ENCODE measurements at regions of chr9 and their contacts with region 1.

Region 1: GRCh38 chr9:33466565-33467495 is 6.9 kb downstream of the NOL6 start:
- DNase-seq: peak; percentile 32
- H3K4me3 ChIP-seq: no peak overlapping the region
- H3K27ac ChIP-seq: no peak overlapping the region
- H3K4me1 ChIP-seq: no peaks in the 10 kb centered on the region
- H3K27me3 ChIP-seq: no peaks in the 10 kb centered on the region
- CTCF ChIP-seq: peak; percentile 90

Region 2: DNA sequence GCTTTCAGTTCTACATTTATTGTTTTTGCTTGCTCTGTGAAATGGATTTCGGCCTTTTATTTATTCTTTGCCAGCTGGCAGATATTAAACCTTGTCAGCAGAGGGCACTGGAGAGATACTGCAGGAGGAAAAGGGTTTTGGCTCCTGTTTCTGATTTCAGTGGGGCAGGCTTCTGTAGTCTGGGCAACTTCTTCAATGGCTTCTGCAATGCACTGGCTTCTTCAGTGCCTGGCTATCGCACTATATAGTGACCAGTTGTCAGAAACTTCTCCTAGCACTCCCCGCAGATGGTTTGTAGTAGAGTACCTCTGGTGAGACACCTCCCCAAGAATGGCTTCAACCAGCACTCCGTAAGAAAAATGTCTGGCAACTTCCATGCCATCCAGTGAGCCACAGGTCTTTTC is 179.7 kb before region 1 on chr9:
- CTCF ChIA-PET with region 1: interaction called, 4 read pairs
- POLR2A ChIA-PET with region 1: no interaction called
- intact Hi-C with region 1: loop called (anchors 5 kb)
- DNase-seq: peak; percentile 82
- H3K4me3 ChIP-seq: no peak overlapping the region
- H3K27ac ChIP-seq: no peak overlapping the region
- H3K4me1 ChIP-seq: peaks cover 4% of the 10 kb centered on the region
- H3K27me3 ChIP-seq: no peaks in the 10 kb centered on the region
- CTCF ChIP-seq: peak; percentile 80

Region 3: GRCh38 chr9:33374634-33375213 is 92.1 kb before region 1 on chr9:
- CTCF ChIA-PET with region 1: interaction called, 21 read pairs
- POLR2A ChIA-PET with region 1: no interaction called
- intact Hi-C with region 1: loop called (anchors 2 kb)
- DNase-seq: peak; percentile 85
- H3K4me3 ChIP-seq: no peak overlapping the region
- H3K27ac ChIP-seq: no peak overlapping the region
- H3K4me1 ChIP-seq: no peaks in the 10 kb centered on the region
- H3K27me3 ChIP-seq: no peaks in the 10 kb centered on the region
- CTCF ChIP-seq: peak; percentile 91

Region 4: DNA sequence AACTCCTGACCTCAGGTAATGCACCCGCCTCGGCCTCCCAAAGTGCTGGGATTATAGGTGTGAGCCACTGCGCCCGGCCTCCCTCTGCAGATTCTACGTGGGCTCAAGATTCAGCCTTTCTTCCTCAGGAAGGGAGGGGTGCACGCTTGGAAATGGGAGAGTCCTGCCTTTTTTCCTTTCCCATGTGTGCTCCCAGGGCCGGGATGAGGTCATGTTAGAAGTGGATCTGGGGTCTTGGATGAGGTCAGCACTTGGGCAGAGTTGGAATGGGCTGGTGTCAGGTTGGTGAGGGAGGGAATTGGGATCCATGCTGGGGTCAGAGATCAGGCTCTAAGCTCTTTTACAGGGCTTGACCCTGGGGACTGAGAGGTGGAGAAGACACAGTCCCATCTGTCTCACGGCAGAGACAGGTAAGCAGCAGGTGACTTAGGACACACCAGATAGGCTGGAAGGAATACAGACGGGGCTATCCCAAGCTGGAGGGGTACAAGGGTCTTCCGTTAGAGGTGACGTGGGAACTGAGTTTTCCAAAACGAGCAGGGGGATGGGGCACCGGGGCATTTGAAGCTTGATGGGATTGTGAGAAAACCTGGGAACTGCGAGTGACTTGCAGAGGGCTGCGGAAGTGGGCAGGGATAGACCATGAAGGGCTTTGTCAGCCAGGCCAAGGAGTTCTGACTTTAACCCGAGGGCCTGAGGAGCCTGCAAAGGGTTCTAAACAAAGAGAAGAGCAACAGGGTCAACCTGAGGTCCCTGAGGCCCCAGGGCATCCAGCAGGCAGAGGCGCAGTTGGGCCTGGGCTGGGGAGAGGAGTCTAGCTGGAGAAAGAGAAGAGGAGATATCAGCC is 62.7 kb before region 1 on chr9:
- CTCF ChIA-PET with region 1: interaction called, 25 read pairs
- POLR2A ChIA-PET with region 1: no interaction called
- intact Hi-C with region 1: no loop called
- DNase-seq: no peak
- H3K4me3 ChIP-seq: no peak overlapping the region
- H3K27ac ChIP-seq: no peak overlapping the region
- H3K4me1 ChIP-seq: no peaks in the 10 kb centered on the region
- H3K27me3 ChIP-seq: no peaks in the 10 kb centered on the region
- CTCF ChIP-seq: no peak

Region 5: GRCh38 chr9:33452828-33453271 is 14.0 kb before region 1 on chr9:
- CTCF ChIA-PET with region 1: interaction called, 11 read pairs
- POLR2A ChIA-PET with region 1: no interaction called
- intact Hi-C with region 1: no loop called
- DNase-seq: peak; percentile 84
- H3K4me3 ChIP-seq: no peak overlapping the region
- H3K27ac ChIP-seq: no peak overlapping the region
- H3K4me1 ChIP-seq: no peaks in the 10 kb centered on the region
- H3K27me3 ChIP-seq: no peaks in the 10 kb centered on the region
- CTCF ChIP-seq: peak; percentile 93

Region 6: DNA sequence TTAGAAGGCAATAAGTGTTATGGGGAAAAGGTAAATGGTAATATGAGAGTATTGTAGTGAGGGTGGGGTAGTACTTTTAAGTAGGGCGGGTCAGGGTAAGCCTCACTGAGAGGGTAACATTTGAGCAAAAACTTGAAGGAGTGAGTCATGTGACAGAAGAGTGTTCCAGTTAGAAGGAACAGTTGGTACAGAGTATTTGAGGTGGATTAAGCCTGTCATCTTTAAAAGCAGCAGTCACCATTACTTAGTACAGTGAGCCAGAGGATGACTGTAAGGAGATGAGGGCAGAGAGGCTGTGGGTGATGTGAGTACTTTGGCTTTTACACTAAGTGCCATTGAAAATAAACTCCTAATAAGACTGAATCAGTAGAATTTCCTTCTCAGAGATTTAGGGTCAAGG is 766.8 kb after region 1 on chr9:
- CTCF ChIA-PET with region 1: no interaction called
- POLR2A ChIA-PET with region 1: no interaction called
- intact Hi-C with region 1: no loop called
- DNase-seq: no peak
- H3K4me3 ChIP-seq: no peak overlapping the region
- H3K27ac ChIP-seq: no peak overlapping the region
- H3K4me1 ChIP-seq: no peaks in the 10 kb centered on the region
- H3K27me3 ChIP-seq: no peaks in the 10 kb centered on the region
- CTCF ChIP-seq: no peak

Measured in A673 (cell line).